ENCODE measurements at regions of chr1 and their contacts with region 1.

Region 1: GRCh38 chr1:161726596-161727457 is 5.5 kb downstream of the FCRLB start:
- DNase-seq: peak; percentile 48 to 88 (median 68)
- ATAC-seq: peak; percentile 67 to 71
- H3K4me3 Mint-ChIP-seq: peak overlapping the region; percentile 91 to 99 (median 94)
- H3K27ac Mint-ChIP-seq: peak overlapping the region in 9 of 10 donors; percentile 58 to 95 (median 90)
- H3K4me1 Mint-ChIP-seq: peaks cover 20 to 53% (median 38%) of the 10 kb centered on the region in 4 donors
- H3K27me3 Mint-ChIP-seq: peaks cover 0 to 7% (median 0%) of the 10 kb centered on the region in 5 donors

Region 2: DNA sequence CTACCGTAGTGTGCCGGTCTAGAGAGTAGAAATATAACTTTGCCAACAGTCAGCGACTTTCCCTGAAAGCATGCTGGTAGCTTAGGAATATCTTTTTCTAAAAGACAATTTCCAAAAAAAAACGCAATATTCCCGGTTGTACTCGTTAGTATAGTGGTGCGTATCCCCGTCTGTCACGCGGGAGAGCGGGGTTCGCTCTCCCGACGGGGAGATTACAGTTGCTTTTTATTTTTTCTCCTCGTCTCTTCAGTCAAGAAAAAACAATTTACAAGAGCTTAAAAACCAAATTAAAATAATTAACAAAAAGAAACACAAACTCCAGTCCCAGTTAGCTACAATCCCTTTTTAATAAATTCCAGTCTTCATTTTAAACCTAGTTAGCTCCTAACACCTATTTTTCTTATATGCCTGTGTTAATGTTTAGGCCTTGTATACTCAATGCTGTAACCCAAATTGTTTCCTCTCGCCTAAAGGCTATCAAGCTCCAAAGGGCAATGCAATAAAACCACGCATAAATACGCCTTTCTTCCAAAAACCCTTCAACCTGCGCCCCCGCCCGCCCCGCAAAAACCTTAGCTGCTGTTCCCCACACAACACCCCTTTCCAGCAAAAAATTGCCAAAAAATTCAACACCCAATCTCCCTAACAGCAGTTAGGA is 194.7 kb before region 1 on chr1:
- POLR2A ChIA-PET with region 1: interaction called, 23 read pairs
- DNase-seq: no peak
- ATAC-seq: no peak
- H3K4me3 Mint-ChIP-seq: peak overlapping the region in 8 of 10 donors; percentile 3 to 53 (median 40)
- H3K27ac Mint-ChIP-seq: peak overlapping the region in 7 of 10 donors; percentile 23 to 75 (median 37)
- H3K4me1 Mint-ChIP-seq: peaks cover 11 to 29% (median 14%) of the 10 kb centered on the region in 4 donors
- H3K27me3 Mint-ChIP-seq: peaks cover 0 to 7% (median 0%) of the 10 kb centered on the region in 5 donors

Region 3: GRCh38 chr1:161738627-161739287 is 11.9 kb after region 1 on chr1:
- POLR2A ChIA-PET with region 1: interaction called, 49 read pairs
- DNase-seq: peak in 9 of 10 donors; percentile 15 to 79 (median 49)
- ATAC-seq: peak; percentile 74 to 79
- H3K4me3 Mint-ChIP-seq: peak overlapping the region in 7 of 10 donors; percentile 1 to 55 (median 47)
- H3K27ac Mint-ChIP-seq: peak overlapping the region in 6 of 10 donors; percentile 16 to 74 (median 49)
- H3K4me1 Mint-ChIP-seq: peaks cover 4 to 38% (median 16%) of the 10 kb centered on the region in 4 donors
- H3K27me3 Mint-ChIP-seq: no peaks in the 10 kb centered on the region

Region 4: DNA sequence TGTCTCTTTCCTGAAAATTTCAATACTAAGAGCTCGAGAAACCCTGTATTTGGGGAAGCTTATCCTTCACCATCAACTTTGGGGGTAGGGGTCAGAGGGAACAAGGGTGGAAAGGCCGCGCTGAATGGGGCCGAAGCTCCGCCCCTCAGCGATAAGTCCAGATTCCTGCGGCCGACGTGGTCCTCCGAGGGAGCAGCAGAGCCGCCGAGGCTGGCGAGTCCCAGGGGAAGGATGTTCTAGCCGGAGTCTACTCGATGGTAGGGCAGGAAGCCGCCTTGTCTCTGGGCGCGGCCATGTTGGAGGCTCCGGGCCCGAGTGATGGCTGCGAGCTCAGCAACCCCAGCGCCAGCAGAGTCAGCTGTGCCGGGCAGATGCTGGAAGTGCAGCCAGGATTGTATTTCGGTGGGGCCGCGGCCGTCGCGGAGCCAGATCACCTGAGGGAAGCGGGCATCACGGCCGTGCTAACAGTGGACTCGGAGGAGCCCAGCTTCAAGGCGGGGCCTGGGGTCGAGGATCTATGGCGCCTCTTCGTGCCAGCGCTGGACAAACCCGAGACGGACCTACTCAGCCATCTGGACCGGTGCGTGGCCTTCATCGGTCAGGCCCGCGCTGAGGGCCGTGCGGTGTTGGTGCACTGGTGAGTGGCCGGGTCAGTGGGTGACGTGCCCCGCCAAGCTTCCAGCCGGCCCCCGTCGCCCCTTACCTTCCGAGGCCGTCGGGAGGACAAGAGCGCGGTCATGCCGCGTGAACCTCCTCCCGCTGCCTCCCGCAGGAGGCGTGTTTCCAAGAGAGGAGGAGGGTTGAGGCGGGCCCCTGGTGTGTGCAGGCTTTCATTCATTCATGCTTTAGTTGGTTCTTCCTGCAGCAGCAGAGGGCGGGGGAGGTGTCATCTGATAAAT is 22.9 kb after region 1 on chr1 and contains the start of gene DUSP12:
- POLR2A ChIA-PET with region 1: interaction called, 40 read pairs
- DNase-seq: peak; percentile 68 to 91 (median 84)
- ATAC-seq: peak; percentile 97 to 98
- H3K4me3 Mint-ChIP-seq: peak within 1 kb of the TSS; percentile 98 to 100 (median 99)
- H3K27ac Mint-ChIP-seq: peak within 1 kb of the TSS; percentile 96 to 99 (median 97)
- H3K4me1 Mint-ChIP-seq: peaks cover 16 to 50% (median 39%) of the 10 kb centered on the region in 4 donors
- H3K27me3 Mint-ChIP-seq: peaks cover 1 to 10% (median 7%) of the 10 kb centered on the region in 5 donors
- polyA plus RNA-seq, gene DUSP12: 62.7 to 73.1 (median 71.1) TPM